ENCODE measurements at regions of chr5 and their contacts with region 1.

Region 1: GRCh38 chr5:88729084-88729828 is 153.7 kb downstream of the MEF2C start:
- DNase-seq: peak; percentile 79
- H3K4me3 ChIP-seq: no peak overlapping the region
- CTCF ChIP-seq: peak; percentile 59

Region 2: GRCh38 chr5:88666761-88667495 is 62.3 kb before region 1 on chr5:
- in situ Hi-C with region 1: no loop called
- DNase-seq: no peak
- H3K4me3 ChIP-seq: peak overlapping the region; percentile 50
- CTCF ChIP-seq: no peak

Region 3: GRCh38 chr5:89729623-89730301 is 1000.5 kb after region 1 on chr5:
- in situ Hi-C with region 1: loop called (anchors 25 kb)
- DNase-seq: peak; percentile 9
- H3K4me3 ChIP-seq: no peak overlapping the region
- CTCF ChIP-seq: peak; percentile 31

Region 4: GRCh38 chr5:90284375-90284774 is 1555.1 kb after region 1 on chr5:
- in situ Hi-C with region 1: loop called (anchors 5 kb)
- DNase-seq: no peak
- H3K4me3 ChIP-seq: no peak overlapping the region
- CTCF ChIP-seq: no peak

Measured in astrocyte of the cerebellum (primary cell).